CD8-positive, alpha-beta T cell (primary cell): ENCODE measurements at regions of chr15 and their contacts with region 1.

Region 1: GRCh38 chr15:28885630-28886430 is at the start of gene APBA2:
- DNase-seq: peak; percentile 9 to 79 (median 60)
- ATAC-seq: peak; percentile 59
- H3K4me3 ChIP-seq: peak within 1 kb of the TSS; percentile 75 to 76
- H3K4me3 Mint-ChIP-seq: peak within 1 kb of the TSS; percentile 91
- H3K27ac ChIP-seq: peak within 1 kb of the TSS; percentile 67 to 69
- H3K27ac Mint-ChIP-seq: peak within 1 kb of the TSS; percentile 99
- H3K4me1 ChIP-seq: peaks cover 44% of the 10 kb centered on the region
- H3K4me1 Mint-ChIP-seq: peaks cover 46% of the 10 kb centered on the region
- H3K27me3 ChIP-seq: no peaks in the 10 kb centered on the region
- H3K27me3 Mint-ChIP-seq: no peaks in the 10 kb centered on the region
- CTCF ChIP-seq: no peak
- total RNA-seq, gene APBA2: 106 to 108 TPM

Region 2: DNA sequence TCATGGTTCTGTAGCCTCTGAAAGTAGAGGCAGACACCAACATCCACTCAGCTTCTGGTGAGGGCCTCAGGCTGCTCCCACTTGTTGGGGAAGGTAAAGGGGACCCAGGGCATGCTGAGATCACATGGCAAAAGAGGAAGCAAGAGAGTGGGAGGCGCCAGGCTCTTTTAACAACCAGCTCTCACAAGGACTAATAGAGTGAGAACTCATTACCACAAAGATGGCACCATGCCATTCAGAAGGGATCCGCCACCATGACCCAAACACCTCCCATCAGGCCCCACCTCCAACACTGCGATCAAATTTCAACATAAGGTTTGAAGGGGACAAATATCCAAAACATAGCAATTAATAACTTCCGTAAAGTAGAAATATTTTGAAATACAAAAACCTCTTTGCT is 979.0 kb before region 1 on chr15:
- CTCF ChIA-PET with region 1: no interaction called
- POLR2A ChIA-PET with region 1: no interaction called
- intact Hi-C with region 1: no loop called
- DNase-seq: no peak
- ATAC-seq: no peak
- H3K4me3 ChIP-seq: no peak overlapping the region
- H3K4me3 Mint-ChIP-seq: no peak overlapping the region
- H3K27ac ChIP-seq: no peak overlapping the region
- H3K27ac Mint-ChIP-seq: no peak overlapping the region
- H3K4me1 ChIP-seq: no peaks in the 10 kb centered on the region
- H3K4me1 Mint-ChIP-seq: no peaks in the 10 kb centered on the region
- H3K27me3 ChIP-seq: no peaks in the 10 kb centered on the region
- H3K27me3 Mint-ChIP-seq: peaks cover 4% of the 10 kb centered on the region
- CTCF ChIP-seq: no peak

Region 3: DNA sequence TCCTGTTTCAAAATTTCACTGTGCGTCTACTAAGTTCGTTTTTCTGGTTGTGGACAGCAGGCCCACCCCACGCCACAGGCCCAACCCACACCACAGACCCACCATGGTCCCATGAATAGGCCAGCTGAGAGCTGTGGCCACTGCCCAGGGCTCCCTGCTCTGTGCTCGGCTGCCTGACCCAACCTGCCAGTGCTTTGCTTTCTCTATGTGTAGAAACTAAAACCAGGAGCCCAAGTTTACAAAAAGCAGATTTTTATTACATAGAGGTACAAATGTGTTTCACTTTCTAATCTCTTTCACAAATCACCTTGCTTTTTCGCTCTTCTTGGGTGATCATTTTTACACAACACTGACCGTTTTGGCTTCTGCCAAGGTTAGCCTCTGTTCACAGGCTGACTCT is 633.0 kb before region 1 on chr15:
- CTCF ChIA-PET with region 1: no interaction called
- POLR2A ChIA-PET with region 1: no interaction called
- intact Hi-C with region 1: no loop called
- DNase-seq: no peak
- ATAC-seq: no peak
- H3K4me3 ChIP-seq: no peak overlapping the region
- H3K4me3 Mint-ChIP-seq: no peak overlapping the region
- H3K27ac ChIP-seq: no peak overlapping the region
- H3K27ac Mint-ChIP-seq: no peak overlapping the region
- H3K4me1 ChIP-seq: no peaks in the 10 kb centered on the region
- H3K4me1 Mint-ChIP-seq: no peaks in the 10 kb centered on the region
- H3K27me3 ChIP-seq: no peaks in the 10 kb centered on the region
- H3K27me3 Mint-ChIP-seq: no peaks in the 10 kb centered on the region
- CTCF ChIP-seq: no peak

Region 4: GRCh38 chr15:28873541-28874190 is 12.2 kb before region 1 on chr15:
- CTCF ChIA-PET with region 1: interaction called, 14 read pairs
- POLR2A ChIA-PET with region 1: no interaction called
- intact Hi-C with region 1: no loop called
- DNase-seq: peak in 6 of 9 experiments; percentile 37 to 74 (median 66)
- ATAC-seq: peak; percentile 88
- H3K4me3 ChIP-seq: no peak overlapping the region
- H3K4me3 Mint-ChIP-seq: no peak overlapping the region
- H3K27ac ChIP-seq: no peak overlapping the region
- H3K27ac Mint-ChIP-seq: no peak overlapping the region
- H3K4me1 ChIP-seq: peaks cover 21% of the 10 kb centered on the region
- H3K4me1 Mint-ChIP-seq: peaks cover 21% of the 10 kb centered on the region
- H3K27me3 ChIP-seq: no peaks in the 10 kb centered on the region
- H3K27me3 Mint-ChIP-seq: no peaks in the 10 kb centered on the region
- CTCF ChIP-seq: peak; percentile 60

Region 5: DNA sequence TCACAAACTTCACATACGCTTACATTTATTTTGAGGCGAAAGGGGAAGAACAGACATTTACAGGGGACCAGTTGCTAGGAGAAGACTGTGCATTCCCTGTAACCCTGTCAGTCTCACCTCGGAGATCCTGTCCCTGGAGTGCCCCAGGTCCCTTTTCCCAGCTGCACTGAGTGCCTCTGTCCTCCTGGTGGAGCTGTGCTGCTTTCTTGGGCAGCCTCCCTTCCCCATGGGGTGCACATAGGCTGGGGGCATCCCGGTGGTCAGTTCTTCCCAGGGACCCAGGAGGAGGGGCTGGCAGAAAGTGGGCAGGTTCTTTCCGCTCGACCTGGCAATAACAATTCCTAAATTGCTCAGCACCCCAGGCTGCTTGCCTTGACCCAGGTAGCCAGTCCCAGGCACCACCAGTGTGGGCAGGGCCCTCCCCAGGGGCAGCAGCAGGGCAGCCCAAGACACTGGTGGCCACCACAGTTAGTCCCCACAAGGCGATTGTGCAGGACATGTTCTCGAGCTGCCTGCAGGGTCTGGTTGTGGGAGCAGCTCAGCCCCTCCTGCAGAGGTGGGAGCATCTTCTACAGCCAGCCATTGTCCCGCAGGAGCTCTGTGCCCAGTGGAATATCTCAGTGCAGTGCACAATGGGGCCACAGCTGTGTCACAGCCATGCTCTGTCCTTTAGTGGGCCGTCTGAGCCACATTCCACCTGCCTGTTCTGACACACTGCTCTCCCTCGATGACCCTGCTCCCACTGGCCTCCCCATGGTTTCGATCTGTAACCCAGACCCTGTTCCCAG is 36.3 kb after region 1 on chr15:
- CTCF ChIA-PET with region 1: interaction called, 4 read pairs
- POLR2A ChIA-PET with region 1: interaction called, 10 read pairs
- intact Hi-C with region 1: loop called (anchors 2 to 5 kb)
- DNase-seq: peak in 1 of 9 experiments; percentile 30
- ATAC-seq: no peak
- H3K4me3 ChIP-seq: peak overlapping the region in 1 of 2 experiments; percentile 4
- H3K4me3 Mint-ChIP-seq: peak overlapping the region; percentile 79
- H3K27ac ChIP-seq: peak overlapping the region in 1 of 2 experiments; percentile 60
- H3K27ac Mint-ChIP-seq: peak overlapping the region; percentile 86
- H3K4me1 ChIP-seq: peaks cover 72% of the 10 kb centered on the region
- H3K4me1 Mint-ChIP-seq: peaks cover 81% of the 10 kb centered on the region
- H3K27me3 ChIP-seq: no peaks in the 10 kb centered on the region
- H3K27me3 Mint-ChIP-seq: no peaks in the 10 kb centered on the region
- CTCF ChIP-seq: no peak